BJ (cell line): ENCODE measurements at regions of chr1 and their contacts with region 1.

Region 1: GRCh38 chr1:161192476-161193465 is 6.1 kb downstream of the ADAMTS4 start:
- DNase-seq: no peak
- H3K4me3 ChIP-seq: no peak overlapping the region
- H3K27me3 ChIP-seq: no peaks in the 10 kb centered on the region
- CTCF ChIP-seq: peak; percentile 93

Region 2: DNA sequence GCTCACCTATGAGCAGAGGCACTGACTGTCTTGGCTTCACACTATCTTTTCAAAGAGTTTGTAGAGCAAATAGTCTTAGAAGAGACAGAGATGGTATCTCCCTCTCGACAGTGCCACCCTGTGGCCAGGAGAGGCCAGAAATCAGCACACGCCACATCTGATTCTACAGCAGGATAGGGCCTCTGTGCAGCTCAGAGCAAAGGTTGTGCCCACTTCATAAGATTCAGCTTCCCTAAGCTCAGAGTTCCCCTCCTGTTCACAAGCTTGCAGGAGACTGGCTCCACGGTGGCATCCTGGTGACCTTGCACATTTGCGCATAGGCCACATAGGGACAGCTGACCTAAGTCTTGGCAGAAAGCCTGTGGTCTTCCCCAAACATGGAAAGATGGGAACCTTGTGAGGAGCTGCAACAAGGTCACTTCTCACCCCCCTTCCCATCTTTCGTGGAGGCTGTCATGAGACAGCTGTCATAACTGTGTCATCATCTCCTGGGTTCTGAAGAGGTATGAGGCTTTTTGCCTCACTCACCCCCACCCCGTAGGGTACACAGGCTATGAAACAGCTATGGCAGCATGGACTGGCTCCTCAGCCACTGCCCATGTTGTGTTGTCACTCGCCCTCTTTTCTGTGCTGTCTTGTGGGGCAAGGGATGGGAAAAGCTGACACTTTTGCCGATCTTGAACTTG is 241.2 kb before region 1 on chr1:
- CTCF ChIA-PET with region 1: no interaction called
- POLR2A ChIA-PET with region 1: no interaction called
- DNase-seq: no peak
- H3K4me3 ChIP-seq: no peak overlapping the region
- H3K27me3 ChIP-seq: no peaks in the 10 kb centered on the region
- CTCF ChIP-seq: peak; percentile 71

Region 3: GRCh38 chr1:161182214-161182613 is 10.6 kb before region 1 on chr1:
- CTCF ChIA-PET with region 1: interaction called, 34 read pairs
- POLR2A ChIA-PET with region 1: no interaction called
- DNase-seq: no peak
- H3K4me3 ChIP-seq: no peak overlapping the region
- H3K27me3 ChIP-seq: no peaks in the 10 kb centered on the region
- CTCF ChIP-seq: no peak